PC-3 (cell line): ENCODE measurements at regions of chr3 and their contacts with region 1.

Region 1: GRCh38 chr3:159616212-159616825 is 372.3 kb upstream of the IL12A start:
- DNase-seq: peak; percentile 78
- ATAC-seq: peak; percentile 57
- H3K4me3 ChIP-seq: no peak overlapping the region
- H3K27ac ChIP-seq: no peak overlapping the region
- H3K4me1 ChIP-seq: peaks cover 26% of the 10 kb centered on the region
- H3K27me3 ChIP-seq: no peaks in the 10 kb centered on the region
- CTCF ChIP-seq: peak; percentile 70

Region 2: DNA sequence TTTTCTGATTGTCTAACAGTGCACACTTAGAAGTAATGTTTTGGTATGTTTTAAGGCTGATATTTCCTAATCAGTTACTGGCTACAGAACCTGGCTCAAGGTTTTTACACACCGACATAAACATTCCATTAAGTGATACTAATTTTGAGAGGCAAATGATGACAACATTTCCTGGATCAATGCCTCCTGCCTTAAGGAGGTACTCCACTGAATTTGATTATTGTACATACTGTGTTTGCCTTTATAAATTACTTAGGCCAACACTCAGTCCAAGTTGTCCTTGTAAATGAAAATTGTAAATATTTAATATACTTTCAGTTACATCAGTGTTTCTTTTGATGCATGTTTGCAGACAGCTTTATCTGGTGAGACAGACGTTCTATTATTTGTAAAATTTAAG is 919.7 kb before region 1 on chr3:
- CTCF ChIA-PET with region 1: no interaction called
- POLR2A ChIA-PET with region 1: no interaction called
- intact Hi-C with region 1: loop called (anchors 5 kb)
- DNase-seq: peak; percentile 63
- ATAC-seq: peak; percentile 74
- H3K4me3 ChIP-seq: no peak overlapping the region
- H3K27ac ChIP-seq: peak overlapping the region; percentile 45
- H3K4me1 ChIP-seq: peaks cover 32% of the 10 kb centered on the region
- H3K27me3 ChIP-seq: no peaks in the 10 kb centered on the region
- CTCF ChIP-seq: no peak

Region 3: DNA sequence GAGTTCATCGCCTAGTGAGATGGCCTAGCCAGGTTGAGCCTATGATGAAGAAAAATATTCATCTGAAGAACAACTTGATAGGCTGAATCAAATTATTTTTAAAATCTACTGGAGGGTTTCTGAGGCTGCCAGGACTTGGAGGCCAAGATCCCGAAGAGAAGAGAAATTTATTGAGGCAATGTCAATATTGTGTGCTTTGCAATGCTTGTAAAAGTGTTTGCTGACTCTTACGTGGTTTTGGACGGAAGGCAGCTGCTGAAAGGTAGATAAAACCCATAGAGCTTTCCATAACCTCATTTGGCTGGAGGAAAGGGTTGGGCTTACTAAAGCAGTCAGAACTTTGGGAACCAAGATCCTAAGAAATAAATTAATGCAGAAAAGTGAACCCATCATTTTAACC is 11.3 kb after region 1 on chr3:
- CTCF ChIA-PET with region 1: no interaction called
- POLR2A ChIA-PET with region 1: no interaction called
- intact Hi-C with region 1: loop called (anchors 1 kb)
- DNase-seq: peak; percentile 96
- ATAC-seq: peak; percentile 89
- H3K4me3 ChIP-seq: peak overlapping the region; percentile 3; the same call in 1 of the 2 replicates
- H3K27ac ChIP-seq: peak overlapping the region; percentile 88
- H3K4me1 ChIP-seq: peaks cover 61% of the 10 kb centered on the region
- H3K27me3 ChIP-seq: no peaks in the 10 kb centered on the region
- CTCF ChIP-seq: no peak

Region 4: DNA sequence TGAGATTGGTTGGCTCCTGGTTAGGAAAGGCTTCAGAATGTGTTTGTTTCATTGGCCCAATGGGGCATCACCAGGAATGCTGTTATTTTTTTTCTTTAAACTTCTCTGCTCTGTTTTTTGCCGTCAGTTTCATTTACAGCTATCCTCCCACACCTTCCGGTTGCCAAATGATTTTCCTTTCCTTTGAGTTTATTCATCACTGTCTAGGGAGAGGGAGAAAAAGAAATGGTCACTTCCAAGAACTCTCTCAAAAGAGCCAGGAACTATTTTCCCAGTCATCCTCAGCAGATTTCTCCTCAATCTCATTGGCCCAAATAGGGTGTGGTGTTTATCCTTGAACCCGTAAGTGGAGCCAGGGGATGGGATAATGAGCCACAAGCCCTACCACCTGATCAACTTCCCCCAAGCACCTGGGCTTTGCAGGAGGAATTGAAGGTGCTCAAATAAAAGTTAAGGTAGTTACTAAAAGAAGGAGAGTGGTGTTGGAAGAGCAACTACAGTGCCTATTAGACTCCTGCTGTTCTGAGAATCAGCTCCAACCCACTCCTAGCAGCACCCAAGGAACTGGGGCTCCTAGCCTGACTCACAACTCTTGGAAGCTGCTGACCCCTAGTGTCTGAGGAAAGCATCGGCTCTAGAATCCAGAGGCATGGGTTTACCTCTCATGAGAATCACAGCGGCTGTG is 188.5 kb after region 1 on chr3:
- CTCF ChIA-PET with region 1: no interaction called
- POLR2A ChIA-PET with region 1: no interaction called
- intact Hi-C with region 1: loop called (anchors 1 kb)
- DNase-seq: peak; percentile 93
- ATAC-seq: peak; percentile 98
- H3K4me3 ChIP-seq: no peak overlapping the region
- H3K27ac ChIP-seq: no peak overlapping the region
- H3K4me1 ChIP-seq: peaks cover 22% of the 10 kb centered on the region
- H3K27me3 ChIP-seq: no peaks in the 10 kb centered on the region
- CTCF ChIP-seq: peak; percentile 97

Region 5: DNA sequence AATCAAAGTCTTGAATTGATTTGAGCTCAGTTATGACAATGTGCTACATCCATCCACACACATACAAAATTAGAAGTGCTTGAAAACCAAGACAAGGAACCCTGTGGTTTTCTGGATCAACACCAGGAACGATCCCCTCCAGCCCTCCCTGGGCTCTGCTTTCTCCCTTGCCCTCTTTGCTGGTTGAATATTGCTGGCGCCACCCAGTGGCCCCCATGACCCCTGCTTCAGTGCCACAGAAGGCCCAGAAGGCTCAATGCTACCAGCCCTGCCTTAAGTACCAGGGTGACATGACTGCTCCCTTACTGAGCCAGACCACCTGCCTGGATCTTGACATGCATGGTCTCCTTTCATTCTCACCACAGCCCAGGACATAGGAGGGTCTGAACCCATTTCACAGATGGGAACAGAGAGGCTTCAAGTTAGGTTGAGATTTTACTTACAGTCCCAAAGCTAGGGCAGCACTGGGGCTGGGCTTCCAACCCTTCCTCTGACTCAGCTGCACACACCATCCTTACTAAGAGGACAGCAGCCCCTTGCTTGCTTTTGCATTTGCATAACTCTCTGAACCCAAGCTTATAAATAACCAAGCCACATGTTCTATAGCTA is 387.3 kb after region 1 on chr3:
- CTCF ChIA-PET with region 1: no interaction called
- POLR2A ChIA-PET with region 1: no interaction called
- intact Hi-C with region 1: loop called (anchors 2 kb)
- DNase-seq: peak; percentile 78
- ATAC-seq: peak; percentile 82
- H3K4me3 ChIP-seq: no peak overlapping the region
- H3K27ac ChIP-seq: no peak overlapping the region
- H3K4me1 ChIP-seq: no peaks in the 10 kb centered on the region
- H3K27me3 ChIP-seq: no peaks in the 10 kb centered on the region
- CTCF ChIP-seq: peak; percentile 87